ENCODE measurements at regions of chr4 and their contacts with region 1.

Region 1: DNA sequence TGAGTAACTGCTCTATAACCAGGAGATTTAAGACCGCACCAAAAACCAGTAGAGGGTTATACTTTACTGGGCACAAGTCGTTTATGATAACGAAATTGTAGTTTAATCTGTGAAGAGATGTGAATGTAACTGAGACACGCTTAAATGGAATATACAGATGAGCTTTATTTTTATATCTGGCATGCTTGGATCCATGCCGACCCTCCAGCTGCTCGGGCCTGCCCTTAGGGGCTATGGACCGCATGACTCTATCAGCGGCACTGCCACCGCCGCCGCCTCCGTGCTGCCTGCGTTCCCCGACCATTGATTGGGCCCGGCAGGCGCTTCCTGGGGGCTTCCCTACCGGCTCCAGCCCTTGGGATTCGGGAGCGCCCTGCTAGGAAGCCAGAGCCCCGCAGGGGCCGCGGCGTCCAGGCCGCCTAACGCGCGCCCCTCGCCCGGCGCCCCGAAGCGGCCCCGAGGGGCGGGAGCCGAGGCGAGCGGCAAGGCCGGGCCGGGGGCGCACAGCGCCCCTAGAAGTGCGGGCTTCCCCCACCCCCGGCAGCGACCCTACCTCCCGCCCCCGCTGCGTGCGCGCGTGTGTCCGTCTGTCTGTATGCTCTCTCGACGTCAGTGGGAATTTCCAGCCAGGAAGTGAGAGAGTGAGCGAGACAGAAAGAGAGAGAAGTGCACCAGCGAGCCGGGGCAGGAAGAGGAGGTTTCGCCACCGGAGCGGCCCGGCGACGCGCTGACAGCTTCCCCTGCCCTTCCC is at the start of gene NFKB1:
- DNase-seq: peak; percentile 71 to 93 (median 86)
- ATAC-seq: peak; percentile 68 to 73
- H3K4me3 Mint-ChIP-seq: peak within 1 kb of the TSS; percentile 89 to 99 (median 94)
- H3K27ac Mint-ChIP-seq: peak within 1 kb of the TSS; percentile 87 to 100 (median 98)
- H3K4me1 Mint-ChIP-seq: peaks cover 12 to 42% (median 30%) of the 10 kb centered on the region in 4 donors
- H3K27me3 Mint-ChIP-seq: no peaks in the 10 kb centered on the region
- polyA plus RNA-seq, gene NFKB1: 27.5 to 82.2 (median 32.4) TPM

Region 2: DNA sequence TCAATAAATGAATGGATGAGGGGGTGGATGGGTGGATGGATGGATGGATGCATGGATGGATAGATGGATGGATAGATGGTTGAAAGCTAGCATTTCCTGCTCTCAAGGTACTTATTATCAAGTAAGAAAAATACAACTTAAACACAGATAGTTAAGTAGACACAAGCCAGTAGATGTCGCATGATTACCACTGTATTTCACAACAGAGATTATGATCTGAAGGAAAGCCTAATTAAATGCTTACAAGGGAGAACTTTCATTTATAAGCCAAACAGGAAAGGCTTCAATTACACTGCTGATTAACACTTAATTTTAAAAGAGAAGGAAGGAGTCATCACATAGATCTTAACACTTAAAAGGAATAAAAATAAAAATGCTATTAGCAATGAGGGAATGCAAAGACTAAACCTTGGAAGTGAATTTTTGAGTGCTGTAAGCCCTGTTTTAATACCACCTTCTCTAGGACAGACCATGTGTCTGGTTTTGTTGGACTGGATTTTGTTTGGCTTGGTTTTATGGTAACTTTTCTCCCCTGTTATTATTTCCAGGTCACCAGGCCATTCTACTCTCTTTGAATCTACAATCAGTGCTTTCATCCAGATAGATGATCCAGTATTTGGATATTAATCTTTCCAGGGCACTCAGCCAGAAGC is 80.2 kb before region 1 on chr4:
- POLR2A ChIA-PET with region 1: no interaction called
- DNase-seq: no peak
- ATAC-seq: no peak
- H3K4me3 Mint-ChIP-seq: no peak overlapping the region
- H3K27ac Mint-ChIP-seq: no peak overlapping the region
- H3K4me1 Mint-ChIP-seq: peaks cover 0 to 12% (median 8%) of the 10 kb centered on the region in 4 donors
- H3K27me3 Mint-ChIP-seq: peaks cover 0 to 5% (median 0%) of the 10 kb centered on the region in 5 donors

Region 3: DNA sequence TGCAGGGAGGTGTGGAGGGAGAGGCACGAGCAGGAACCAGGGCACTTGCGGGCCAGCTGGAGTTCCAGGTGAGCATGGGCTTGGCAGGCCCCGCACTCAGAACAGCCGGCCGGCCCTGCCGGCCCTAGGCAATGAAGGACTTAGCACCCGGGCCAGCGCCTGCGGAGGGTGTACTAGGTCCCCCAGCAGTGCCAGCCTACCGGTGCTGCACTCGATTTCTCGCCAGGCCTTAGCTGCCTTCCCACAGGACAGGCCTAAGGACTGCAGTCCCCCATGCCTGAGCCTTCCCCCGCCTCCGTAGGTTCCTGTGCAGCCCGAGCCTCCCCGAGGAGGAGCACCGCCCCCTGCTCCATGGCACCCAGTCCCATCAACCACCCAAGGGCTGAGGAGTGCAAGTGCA is 17.8 kb before region 1 on chr4:
- POLR2A ChIA-PET with region 1: interaction called, 20 read pairs
- DNase-seq: no peak
- ATAC-seq: no peak
- H3K4me3 Mint-ChIP-seq: no peak overlapping the region
- H3K27ac Mint-ChIP-seq: no peak overlapping the region
- H3K4me1 Mint-ChIP-seq: peaks cover 9 to 16% (median 12%) of the 10 kb centered on the region in 4 donors
- H3K27me3 Mint-ChIP-seq: no peaks in the 10 kb centered on the region

Region 4: GRCh38 chr4:102518703-102519131 is 17.8 kb after region 1 on chr4:
- POLR2A ChIA-PET with region 1: interaction called, 13 read pairs
- DNase-seq: peak in 8 of 10 donors; percentile 13 to 77 (median 70)
- ATAC-seq: peak; percentile 68 to 85
- H3K4me3 Mint-ChIP-seq: peak overlapping the region; percentile 15 to 81 (median 66)
- H3K27ac Mint-ChIP-seq: peak overlapping the region; percentile 73 to 98 (median 94)
- H3K4me1 Mint-ChIP-seq: peaks cover 45 to 77% (median 71%) of the 10 kb centered on the region in 4 donors
- H3K27me3 Mint-ChIP-seq: no peaks in the 10 kb centered on the region

Region 5: DNA sequence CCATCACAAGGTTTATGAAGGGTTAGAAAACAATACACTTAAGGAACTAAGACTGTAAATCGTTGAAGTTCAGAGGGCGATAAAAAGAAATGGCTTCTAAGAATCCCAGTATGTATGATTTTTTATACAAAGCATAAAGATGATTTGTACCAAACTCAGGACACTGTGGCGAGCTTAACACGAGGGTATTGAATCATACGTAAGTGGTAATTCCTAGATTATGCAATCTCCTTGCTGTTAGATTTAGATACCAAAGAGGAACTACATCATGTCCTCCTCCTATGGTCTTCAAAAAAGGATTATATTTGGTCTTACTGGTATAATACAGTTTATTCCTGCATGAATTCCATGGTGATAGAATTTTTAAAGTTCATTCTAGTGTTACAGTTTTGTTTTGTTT is 24.2 kb after region 1 on chr4:
- POLR2A ChIA-PET with region 1: interaction called, 31 read pairs
- DNase-seq: no peak
- ATAC-seq: no peak
- H3K4me3 Mint-ChIP-seq: peak overlapping the region in 5 of 10 donors; percentile 17 to 57 (median 39)
- H3K27ac Mint-ChIP-seq: peak overlapping the region in 9 of 10 donors; percentile 8 to 90 (median 83)
- H3K4me1 Mint-ChIP-seq: peaks cover 47 to 94% (median 79%) of the 10 kb centered on the region in 4 donors
- H3K27me3 Mint-ChIP-seq: no peaks in the 10 kb centered on the region

Region 6: GRCh38 chr4:102612824-102613366 is 112.0 kb after region 1 on chr4:
- POLR2A ChIA-PET with region 1: interaction called, 19 read pairs
- DNase-seq: peak in 9 of 10 donors; percentile 21 to 81 (median 60)
- ATAC-seq: peak; percentile 83 to 92
- H3K4me3 Mint-ChIP-seq: peak overlapping the region; percentile 78 to 97 (median 86)
- H3K27ac Mint-ChIP-seq: peak overlapping the region; percentile 96 to 100 (median 97)
- H3K4me1 Mint-ChIP-seq: peaks cover 35 to 84% (median 75%) of the 10 kb centered on the region in 4 donors
- H3K27me3 Mint-ChIP-seq: no peaks in the 10 kb centered on the region

Region 7: DNA sequence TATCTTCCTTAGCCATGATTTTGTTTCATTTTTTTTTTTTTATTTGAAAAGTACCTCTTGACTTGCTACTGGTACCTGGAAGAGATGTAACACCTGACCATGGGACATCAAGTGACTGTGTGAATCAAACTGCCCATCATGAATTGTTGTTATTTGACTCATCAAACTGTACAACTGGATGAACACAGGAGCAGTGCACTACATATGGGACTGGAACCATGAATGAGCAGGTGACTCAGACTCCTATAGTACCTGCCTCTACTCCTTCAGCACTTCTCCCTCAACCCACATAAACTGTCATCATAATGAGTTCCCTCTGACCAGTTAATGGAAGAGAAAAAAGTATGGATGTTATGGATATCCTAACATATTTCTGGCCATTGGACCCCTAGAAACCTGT is 342.4 kb after region 1 on chr4:
- POLR2A ChIA-PET with region 1: no interaction called
- DNase-seq: no peak
- ATAC-seq: no peak
- H3K4me3 Mint-ChIP-seq: no peak overlapping the region
- H3K27ac Mint-ChIP-seq: no peak overlapping the region
- H3K4me1 Mint-ChIP-seq: peaks cover 0 to 4% (median 0%) of the 10 kb centered on the region in 4 donors
- H3K27me3 Mint-ChIP-seq: no peaks in the 10 kb centered on the region